Heart right ventricle (tissue), 16 donors: ENCODE measurements at regions of chr3 and their contacts with region 1.

Region 1: DNA sequence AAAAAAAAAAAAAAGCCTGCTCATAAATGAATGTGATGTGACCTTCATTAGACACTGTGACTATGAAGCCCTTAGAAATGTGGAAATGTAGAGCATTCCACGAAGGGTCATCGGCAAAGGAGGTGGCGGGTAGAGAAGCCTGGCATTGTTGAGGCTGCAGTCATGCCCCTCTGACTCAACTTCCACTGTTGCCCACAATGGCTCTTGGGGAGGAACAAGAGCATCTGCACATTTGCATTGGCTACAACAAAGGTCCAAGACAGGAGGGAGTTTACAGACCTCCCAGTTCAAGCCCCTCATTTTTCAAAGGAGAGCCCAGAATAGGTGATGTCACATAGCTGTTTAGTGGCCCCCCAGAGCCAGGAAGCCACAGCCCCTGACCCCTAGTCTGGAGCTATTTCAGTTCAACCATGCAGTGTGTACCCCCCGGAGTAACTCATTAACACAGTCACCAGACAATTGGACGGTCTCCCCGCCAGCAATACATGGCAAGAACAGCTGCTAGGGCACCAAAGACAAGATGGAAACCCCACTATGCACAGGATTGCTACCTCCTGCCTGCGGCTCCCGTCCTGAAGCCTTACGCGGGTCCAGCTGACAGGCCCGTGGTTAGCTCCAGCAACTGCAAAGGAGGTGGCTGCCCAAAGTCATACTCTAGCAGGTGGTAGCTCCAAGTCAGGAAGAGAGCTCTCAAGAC is 56.2 kb downstream of the SH3BP5 start:
- DNase-seq: no peak
- ATAC-seq: no peak
- H3K4me3 ChIP-seq: no peak overlapping the region
- H3K27ac ChIP-seq: no peak overlapping the region
- H3K4me1 ChIP-seq: peaks cover 0 to 61% (median 3%) of the 10 kb centered on the region in 9 donors
- H3K27me3 ChIP-seq: no peaks in the 10 kb centered on the region
- CTCF ChIP-seq: no peak

Region 2: GRCh38 chr3:14997941-14998340 is 278.2 kb before region 1 on chr3:
- intact Hi-C with region 1: no loop called
- DNase-seq: no peak
- ATAC-seq: no peak
- H3K4me3 ChIP-seq: no peak overlapping the region
- H3K27ac ChIP-seq: no peak overlapping the region
- H3K4me1 ChIP-seq: peaks cover 0 to 6% (median 0%) of the 10 kb centered on the region in 9 donors
- H3K27me3 ChIP-seq: no peaks in the 10 kb centered on the region
- CTCF ChIP-seq: no peak

Region 3: GRCh38 chr3:15319575-15319974 is 43.4 kb after region 1 on chr3:
- intact Hi-C with region 1: loop called in 2 of 10 experiments (anchors 5 kb)
- DNase-seq: peak in 1 of 2 donors; percentile 39
- ATAC-seq: peak; percentile 48 to 80 (median 63)
- H3K4me3 ChIP-seq: no peak overlapping the region
- H3K27ac ChIP-seq: peak overlapping the region in 9 of 10 donors; percentile 18 to 74 (median 45)
- H3K4me1 ChIP-seq: peaks cover 8 to 87% (median 73%) of the 10 kb centered on the region in 9 donors
- H3K27me3 ChIP-seq: no peaks in the 10 kb centered on the region
- CTCF ChIP-seq: no peak